IMR-90 (cell line): ENCODE measurements at regions of chr7 and their contacts with region 1.

Region 1: GRCh38 chr7:86407291-86407690 is 236.4 kb upstream of the GRM3 start:
- DNase-seq: no peak
- ATAC-seq: no peak
- H3K4me3 ChIP-seq: no peak overlapping the region
- H3K27ac ChIP-seq: no peak overlapping the region
- H3K4me1 ChIP-seq: no peaks in the 10 kb centered on the region
- H3K27me3 ChIP-seq: no peaks in the 10 kb centered on the region
- CTCF ChIP-seq: no peak
- POLR2A ChIP-seq: no peak
- RAD21 ChIP-seq: no peak

Region 2: DNA sequence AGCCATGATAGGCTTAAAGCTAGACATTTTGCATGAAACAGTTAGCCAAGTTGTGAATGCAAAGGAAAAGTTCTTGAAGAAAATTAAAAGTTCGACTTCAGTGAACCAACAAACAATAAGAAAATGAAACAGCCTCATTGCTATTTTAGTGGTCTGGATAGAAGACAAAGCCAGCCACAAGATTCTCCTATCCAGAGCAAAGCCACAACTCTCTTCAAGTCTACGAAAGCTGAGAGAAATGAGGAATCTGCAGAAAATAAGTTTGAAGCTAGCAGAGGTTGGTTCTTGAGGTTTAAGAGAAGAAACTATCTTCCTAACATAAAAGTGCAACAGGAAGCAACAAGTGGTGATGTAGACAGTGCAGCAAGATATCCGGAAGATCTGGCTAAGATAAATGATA is 35.0 kb before region 1 on chr7:
- CTCF ChIA-PET with region 1: interaction called, 10 read pairs
- POLR2A ChIA-PET with region 1: no interaction called
- dilution Hi-C with region 1: no loop called
- in situ Hi-C with region 1: no loop called
- intact Hi-C with region 1: no loop called
- DNase-seq: no peak
- ATAC-seq: no peak
- H3K4me3 ChIP-seq: no peak overlapping the region
- H3K27ac ChIP-seq: no peak overlapping the region
- H3K4me1 ChIP-seq: no peaks in the 10 kb centered on the region
- H3K27me3 ChIP-seq: no peaks in the 10 kb centered on the region
- CTCF ChIP-seq: no peak
- POLR2A ChIP-seq: no peak
- RAD21 ChIP-seq: no peak

Region 3: DNA sequence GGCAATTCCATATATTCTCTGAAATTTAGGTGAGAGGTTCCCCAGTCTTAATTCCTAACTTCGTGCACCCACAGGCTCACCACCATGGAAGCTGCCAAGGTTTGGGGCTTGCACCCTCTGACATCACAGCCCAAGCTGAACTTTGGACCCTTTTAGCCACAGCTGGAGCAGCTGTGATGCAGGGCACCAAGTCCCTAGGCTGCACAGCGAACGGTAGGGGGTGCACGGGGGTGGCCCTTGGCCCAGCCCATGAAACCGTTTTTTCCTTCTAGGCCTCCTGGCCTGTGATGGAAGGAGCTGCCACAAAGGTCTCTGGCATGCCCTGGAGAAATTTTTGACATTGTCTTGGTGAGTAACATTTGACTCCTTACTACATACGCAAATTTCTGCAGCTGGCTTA is 15.5 kb before region 1 on chr7:
- CTCF ChIA-PET with region 1: no interaction called
- POLR2A ChIA-PET with region 1: no interaction called
- dilution Hi-C with region 1: no loop called
- in situ Hi-C with region 1: no loop called
- intact Hi-C with region 1: no loop called
- DNase-seq: no peak
- ATAC-seq: no peak
- H3K4me3 ChIP-seq: no peak overlapping the region
- H3K27ac ChIP-seq: no peak overlapping the region
- H3K4me1 ChIP-seq: no peaks in the 10 kb centered on the region
- H3K27me3 ChIP-seq: no peaks in the 10 kb centered on the region
- CTCF ChIP-seq: no peak
- POLR2A ChIP-seq: no peak
- RAD21 ChIP-seq: no peak

Region 4: DNA sequence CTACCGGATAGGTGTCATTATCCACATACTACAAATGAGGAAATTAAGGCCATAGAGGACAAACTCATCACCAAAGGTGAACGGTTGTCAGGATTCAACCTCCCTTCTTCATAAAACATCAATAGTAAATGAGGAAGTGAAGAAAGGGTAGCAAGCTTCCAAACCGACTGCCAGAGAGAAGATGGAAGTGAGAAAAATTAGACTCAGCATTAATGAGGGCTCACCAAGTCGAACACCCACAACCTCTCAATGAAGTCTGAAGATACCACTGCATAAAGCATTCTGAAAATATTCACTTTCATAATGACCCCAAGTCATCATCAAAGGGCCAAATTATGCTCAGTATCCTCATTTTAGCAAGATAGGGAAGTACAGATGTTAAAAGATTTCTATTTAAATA is 1038.6 kb after region 1 on chr7:
- CTCF ChIA-PET with region 1: no interaction called
- POLR2A ChIA-PET with region 1: no interaction called
- dilution Hi-C with region 1: no loop called
- in situ Hi-C with region 1: no loop called
- intact Hi-C with region 1: no loop called
- DNase-seq: no peak
- ATAC-seq: no peak
- H3K4me3 ChIP-seq: no peak overlapping the region
- H3K27ac ChIP-seq: no peak overlapping the region
- H3K4me1 ChIP-seq: no peaks in the 10 kb centered on the region
- H3K27me3 ChIP-seq: peaks cover 2% of the 10 kb centered on the region; the same call in 1 of the 2 replicates
- CTCF ChIP-seq: no peak
- POLR2A ChIP-seq: no peak
- RAD21 ChIP-seq: no peak

Region 5: DNA sequence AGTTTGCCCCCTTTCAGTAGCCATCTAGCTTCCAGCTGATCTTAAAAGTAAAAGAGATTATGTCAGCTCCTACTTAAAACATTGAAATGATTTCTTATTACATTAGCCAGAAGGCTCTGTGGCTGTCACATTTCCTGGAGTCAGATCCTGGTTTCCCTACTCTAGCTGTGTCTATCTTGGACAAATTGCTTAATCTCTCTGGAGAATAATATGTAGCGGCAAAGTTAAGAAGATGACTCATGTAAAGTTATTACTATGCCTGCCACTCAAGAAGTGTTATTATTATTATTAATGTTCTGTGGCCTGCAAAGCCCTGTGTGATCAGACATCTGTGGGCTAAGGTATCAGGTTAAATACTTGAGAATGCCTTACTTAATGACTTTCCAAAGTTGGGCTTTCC is 1328.1 kb after region 1 on chr7:
- CTCF ChIA-PET with region 1: no interaction called
- POLR2A ChIA-PET with region 1: no interaction called
- dilution Hi-C with region 1: no loop called
- in situ Hi-C with region 1: no loop called
- intact Hi-C with region 1: no loop called
- DNase-seq: no peak
- ATAC-seq: no peak
- H3K4me3 ChIP-seq: no peak overlapping the region
- H3K27ac ChIP-seq: no peak overlapping the region
- H3K4me1 ChIP-seq: no peaks in the 10 kb centered on the region
- H3K27me3 ChIP-seq: no peaks in the 10 kb centered on the region
- CTCF ChIP-seq: no peak
- POLR2A ChIP-seq: no peak
- RAD21 ChIP-seq: no peak